H1 (cell line): ENCODE measurements at regions of chr4 and their contacts with region 1.

Region 1: DNA sequence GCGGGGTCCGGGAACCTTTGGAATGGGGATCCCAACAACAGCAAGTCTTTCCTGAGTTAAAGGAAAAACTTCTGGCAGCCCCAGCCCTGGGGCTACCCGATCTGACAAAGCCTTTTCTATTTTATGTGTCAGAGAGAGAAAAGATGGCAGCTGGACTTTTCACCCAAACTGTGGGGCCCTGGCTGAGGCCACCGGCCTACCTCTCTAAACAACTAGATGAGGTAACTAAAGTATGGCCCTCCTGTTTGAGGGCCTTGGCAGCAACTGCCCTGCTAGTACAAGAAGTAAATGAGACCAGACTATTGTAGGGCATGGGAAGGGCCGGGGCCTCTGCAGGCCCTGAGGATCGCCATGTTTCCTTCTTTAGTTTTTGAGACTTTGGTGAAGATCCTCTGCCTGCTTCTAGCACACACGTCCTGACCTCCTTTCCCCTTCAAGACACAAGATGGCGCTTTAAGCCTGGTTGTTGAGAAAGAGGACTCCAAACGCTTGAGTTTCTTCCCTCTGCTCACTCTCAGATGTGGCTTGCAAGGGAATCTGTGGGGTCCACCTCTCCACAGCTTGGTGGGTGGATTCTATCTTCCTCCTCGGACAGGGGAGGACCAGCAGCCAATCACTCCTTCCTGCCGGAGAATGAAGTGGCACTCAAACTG is 18.5 kb upstream of the DRD5 start:
- DNase-seq: peak; percentile 29 to 67
- H3K4me3 ChIP-seq: no peak overlapping the region
- H3K27ac ChIP-seq: no peak overlapping the region
- H3K4me1 ChIP-seq: no peaks in the 10 kb centered on the region
- H3K27me3 ChIP-seq: no peaks in the 10 kb centered on the region
- CTCF ChIP-seq: peak; percentile 45 to 95 (median 81)
- EP300 ChIP-seq: no peak
- POLR2A ChIP-seq: no peak
- RAD21 ChIP-seq: peak; percentile 97

Region 2: DNA sequence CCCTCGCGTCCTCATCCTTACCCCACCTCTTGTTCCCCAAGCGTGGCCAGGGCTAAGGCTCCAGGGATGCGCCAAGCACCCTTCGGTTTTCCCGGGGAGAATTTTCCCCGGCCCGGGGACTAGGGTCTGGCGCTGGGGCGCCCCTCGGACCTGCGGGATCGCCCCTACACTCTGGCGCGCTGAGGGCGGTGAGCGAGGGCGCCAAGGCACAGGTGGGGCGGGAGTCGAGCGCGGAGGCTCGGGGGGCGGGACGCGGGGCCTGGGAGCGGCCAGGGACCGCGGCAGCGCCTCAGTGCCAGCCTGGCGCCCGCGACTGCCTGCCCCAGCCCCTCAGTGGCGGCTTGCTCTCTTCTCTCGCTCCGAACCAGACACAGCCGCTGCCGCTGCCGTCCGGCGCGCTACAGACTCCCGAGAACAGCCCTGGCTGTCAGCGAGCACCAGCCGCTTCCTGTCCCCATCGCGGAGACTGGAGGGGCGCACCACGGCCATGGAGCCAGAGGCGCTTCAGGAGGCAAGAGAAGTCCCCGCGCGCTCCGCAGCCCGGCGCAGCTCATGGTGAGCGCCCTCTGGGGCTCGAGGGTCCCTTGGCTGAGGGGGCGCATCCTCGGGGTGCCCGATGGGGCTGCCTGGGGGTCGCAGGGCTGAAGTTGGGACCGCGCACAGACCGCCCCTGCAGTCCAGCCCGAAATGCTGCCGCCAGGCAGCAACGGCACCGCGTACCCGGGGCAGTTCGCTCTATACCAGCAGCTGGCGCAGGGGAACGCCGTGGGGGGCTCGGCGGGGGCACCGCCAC is 18.6 kb after region 1 on chr4 and contains the start of gene DRD5:
- CTCF ChIA-PET with region 1: interaction called, 13 read pairs
- POLR2A ChIA-PET with region 1: no interaction called
- DNase-seq: peak; percentile 17 to 71
- H3K4me3 ChIP-seq: peak within 1 kb of the TSS; percentile 29 to 66 (median 34)
- H3K27ac ChIP-seq: no peak within 1 kb of the TSS
- H3K4me1 ChIP-seq: no peaks in the 10 kb centered on the region; a peak in 1 of 7 replicates
- H3K27me3 ChIP-seq: peaks cover 13 to 36% (median 31%) of the 10 kb centered on the region in 4 experiments
- CTCF ChIP-seq: no peak
- EP300 ChIP-seq: no peak
- POLR2A ChIP-seq: no peak
- RAD21 ChIP-seq: no peak
- total RNA-seq, gene DRD5: 0.11 TPM in 1 of 2 replicates, not detected in the other

Region 3: GRCh38 chr4:9880406-9881197 is 117.7 kb after region 1 on chr4:
- CTCF ChIA-PET with region 1: interaction called, 11 read pairs
- POLR2A ChIA-PET with region 1: no interaction called
- DNase-seq: no peak
- H3K4me3 ChIP-seq: no peak overlapping the region
- H3K27ac ChIP-seq: no peak overlapping the region
- H3K4me1 ChIP-seq: peaks cover 7 to 15% (median 11%) of the 10 kb centered on the region in 4 experiments
- H3K27me3 ChIP-seq: no peaks in the 10 kb centered on the region
- CTCF ChIP-seq: no peak
- EP300 ChIP-seq: no peak
- POLR2A ChIP-seq: no peak
- RAD21 ChIP-seq: no peak

Region 4: GRCh38 chr4:9898596-9899305 is 135.8 kb after region 1 on chr4:
- CTCF ChIA-PET with region 1: interaction called, 77 read pairs
- POLR2A ChIA-PET with region 1: no interaction called
- DNase-seq: peak; percentile 68 to 71
- H3K4me3 ChIP-seq: no peak overlapping the region
- H3K27ac ChIP-seq: no peak overlapping the region
- H3K4me1 ChIP-seq: peaks cover 0 to 3% (median 0%) of the 10 kb centered on the region in 4 experiments; a peak in 2 of 7 replicates
- H3K27me3 ChIP-seq: no peaks in the 10 kb centered on the region
- CTCF ChIP-seq: peak; percentile 56 to 90 (median 79)
- EP300 ChIP-seq: no peak
- POLR2A ChIP-seq: no peak
- RAD21 ChIP-seq: peak; percentile 84 to 91

Region 5: DNA sequence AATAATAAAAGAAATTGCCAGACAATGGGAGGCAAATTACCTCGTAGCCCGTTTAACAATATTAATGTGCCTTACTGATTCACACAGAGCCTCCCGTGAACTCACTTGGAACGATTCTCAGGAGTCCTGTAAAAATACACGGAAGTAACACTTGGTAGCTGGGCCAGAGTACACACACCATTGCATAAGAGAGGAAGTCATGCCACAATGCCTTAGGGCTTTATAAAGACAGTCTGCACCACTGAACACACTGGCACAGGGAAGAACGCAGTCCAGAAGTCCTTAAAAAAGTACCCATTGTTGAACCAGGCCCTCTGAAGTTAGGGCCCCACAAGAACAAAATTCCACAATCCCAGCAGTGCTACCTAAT is 243.3 kb after region 1 on chr4:
- CTCF ChIA-PET with region 1: interaction called, 12 read pairs
- POLR2A ChIA-PET with region 1: no interaction called
- DNase-seq: no peak
- H3K4me3 ChIP-seq: no peak overlapping the region
- H3K27ac ChIP-seq: no peak overlapping the region
- H3K4me1 ChIP-seq: no peaks in the 10 kb centered on the region
- H3K27me3 ChIP-seq: no peaks in the 10 kb centered on the region; a peak in 1 of 7 replicates
- CTCF ChIP-seq: no peak
- EP300 ChIP-seq: no peak
- POLR2A ChIP-seq: no peak
- RAD21 ChIP-seq: no peak

Region 6: GRCh38 chr4:10018818-10019461 is 256.0 kb after region 1 on chr4:
- CTCF ChIA-PET with region 1: interaction called, 211 read pairs
- POLR2A ChIA-PET with region 1: interaction called, 5 read pairs
- DNase-seq: peak; percentile 79 to 99
- H3K4me3 ChIP-seq: peak overlapping the region; percentile 25 to 61 (median 48); a peak in 7 of 8 replicates
- H3K27ac ChIP-seq: peak overlapping the region; percentile 51; the same call in 1 of the 2 replicates
- H3K4me1 ChIP-seq: peaks cover 0 to 12% (median 4%) of the 10 kb centered on the region in 4 experiments; a peak in 5 of 7 replicates
- H3K27me3 ChIP-seq: peaks cover 0 to 12% (median 6%) of the 10 kb centered on the region in 4 experiments; a peak in 4 of 7 replicates
- CTCF ChIP-seq: peak in 2 of 3 experiments; percentile 96 to 100; a peak in 3 of 4 replicates
- EP300 ChIP-seq: no peak
- POLR2A ChIP-seq: no peak; a peak in 1 of 3 replicates
- RAD21 ChIP-seq: peak; percentile 91 to 96

Region 7: DNA sequence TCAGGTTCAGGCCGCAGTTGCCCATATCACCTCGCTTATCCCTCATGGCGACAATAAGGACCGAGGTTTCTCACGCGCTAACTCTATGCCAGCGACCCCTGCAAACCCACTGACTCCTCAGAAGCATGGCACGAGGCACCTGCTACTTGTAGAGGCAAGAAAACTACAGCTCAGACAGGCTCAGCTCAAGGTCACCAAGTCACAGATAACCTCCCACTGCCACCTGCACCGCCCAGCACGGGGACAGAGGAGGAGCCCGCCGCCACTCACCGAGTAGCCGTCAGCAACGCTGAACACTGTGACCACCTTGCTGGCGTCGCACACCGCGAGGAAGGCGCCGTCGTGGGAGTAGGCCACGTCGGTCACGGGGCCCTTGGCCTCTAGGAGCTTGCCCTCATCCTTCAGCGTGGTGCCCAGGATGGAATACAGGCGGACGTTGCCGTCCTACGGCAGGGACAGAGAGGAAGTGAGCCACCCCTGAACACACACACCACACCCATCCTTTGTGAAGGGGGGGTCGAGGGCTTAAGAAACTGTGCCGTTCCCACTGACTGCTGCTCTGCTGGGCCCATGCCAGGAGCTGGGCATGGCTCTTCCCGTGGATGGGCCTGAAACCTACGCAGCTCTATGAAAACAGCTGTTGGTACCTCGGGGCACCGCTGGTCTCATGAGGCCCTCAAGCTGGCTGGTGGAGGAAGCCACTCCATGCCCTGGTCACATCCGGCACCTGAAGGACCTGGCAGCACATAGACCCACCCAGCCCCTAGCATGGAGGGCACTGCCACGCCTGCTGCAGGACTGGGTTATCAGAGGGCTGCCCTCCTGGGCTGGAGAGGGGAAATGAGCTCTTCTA is 314.8 kb after region 1 on chr4:
- CTCF ChIA-PET with region 1: no interaction called
- POLR2A ChIA-PET with region 1: no interaction called
- DNase-seq: no peak
- H3K4me3 ChIP-seq: no peak overlapping the region
- H3K27ac ChIP-seq: no peak overlapping the region
- H3K4me1 ChIP-seq: no peaks in the 10 kb centered on the region
- H3K27me3 ChIP-seq: no peaks in the 10 kb centered on the region
- CTCF ChIP-seq: no peak
- EP300 ChIP-seq: no peak
- POLR2A ChIP-seq: no peak
- RAD21 ChIP-seq: no peak